Endothelial cell of umbilical vein (primary cell): ENCODE measurements at regions of chr7 and their contacts with region 1.

Region 1: DNA sequence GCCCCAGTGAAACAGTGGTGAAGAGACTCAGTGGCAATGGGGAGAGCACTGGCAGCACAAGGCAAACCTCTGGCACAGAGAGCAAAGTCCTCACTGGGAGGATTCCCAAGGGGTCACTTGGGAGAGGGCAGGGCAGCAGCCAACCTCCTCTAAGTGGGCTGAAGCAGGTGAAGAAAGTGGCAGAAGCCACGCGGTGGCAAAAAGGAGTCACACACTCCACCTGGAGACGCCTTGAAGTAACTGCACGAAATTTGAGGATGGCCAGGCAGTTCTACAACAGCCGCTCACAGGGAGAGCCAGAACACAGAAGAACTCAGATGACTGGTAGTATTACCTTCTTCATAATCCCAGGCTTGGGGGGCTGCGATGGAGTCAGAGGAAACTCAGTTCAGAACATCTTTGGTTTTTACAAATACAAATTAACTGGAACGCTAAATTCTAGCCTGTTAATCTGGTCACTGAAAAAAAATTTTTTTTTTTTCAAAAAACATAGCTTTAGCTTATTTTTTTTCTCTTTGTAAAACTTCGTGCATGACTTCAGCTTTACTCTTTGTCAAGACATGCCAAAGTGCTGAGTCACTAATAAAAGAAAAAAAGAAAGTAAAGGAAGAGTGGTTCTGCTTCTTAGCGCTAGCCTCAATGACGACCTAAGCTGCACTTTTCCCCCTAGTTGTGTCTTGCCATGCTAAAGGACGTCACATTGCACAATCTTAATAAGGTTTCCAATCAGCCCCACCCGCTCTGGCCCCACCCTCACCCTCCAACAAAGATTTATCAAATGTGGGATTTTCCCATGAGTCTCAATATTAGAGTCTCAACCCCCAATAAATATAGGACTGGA is 435 bp upstream of the IL6 start:
- DNase-seq: peak; percentile 84
- H3K4me3 ChIP-seq: peak overlapping the region; percentile 21 to 84 (median 42)
- H3K27ac ChIP-seq: peak overlapping the region; percentile 93
- H3K4me1 ChIP-seq: peaks cover 51% of the 10 kb centered on the region
- H3K27me3 ChIP-seq: no peaks in the 10 kb centered on the region
- CTCF ChIP-seq: peak; percentile 56 to 62
- POLR2A ChIP-seq: no peak

Region 2: GRCh38 chr7:22586786-22587140 is 139.8 kb before region 1 on chr7:
- CTCF ChIA-PET with region 1: interaction called, 130 read pairs
- POLR2A ChIA-PET with region 1: interaction called, 9 read pairs
- dilution Hi-C with region 1: no loop called
- intact Hi-C with region 1: loop called (anchors 1 kb)
- DNase-seq: no peak
- H3K4me3 ChIP-seq: no peak overlapping the region
- H3K27ac ChIP-seq: peak overlapping the region; percentile 95
- H3K4me1 ChIP-seq: peaks cover 75% of the 10 kb centered on the region
- H3K27me3 ChIP-seq: no peaks in the 10 kb centered on the region
- CTCF ChIP-seq: peak; percentile 34 to 56
- POLR2A ChIP-seq: no peak

Region 3: DNA sequence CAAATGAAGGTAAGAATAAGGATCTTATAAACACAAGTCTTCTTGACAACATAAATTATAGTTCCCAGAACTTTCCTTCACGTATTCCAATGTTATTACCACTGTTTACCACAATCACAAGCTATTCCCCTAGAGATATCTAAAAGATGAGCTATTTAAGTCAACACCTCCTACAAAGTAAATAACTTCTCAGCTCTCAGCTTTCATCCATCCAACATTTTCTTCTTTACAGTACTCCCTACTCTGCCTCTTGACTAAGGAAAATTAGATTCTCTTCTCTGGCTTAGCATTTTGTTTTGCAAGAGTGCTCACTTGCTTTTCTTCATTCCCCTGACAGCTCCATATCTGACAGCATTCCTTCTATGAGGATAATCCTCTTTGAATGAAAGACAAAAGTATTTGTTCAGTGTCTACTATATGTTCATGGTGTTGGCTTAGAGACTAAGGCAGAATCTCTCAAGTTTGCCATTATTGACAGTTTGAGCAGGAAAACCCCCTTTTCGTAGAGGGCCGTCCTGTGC is 92.6 kb before region 1 on chr7:
- CTCF ChIA-PET with region 1: interaction called, 17 read pairs
- POLR2A ChIA-PET with region 1: no interaction called
- dilution Hi-C with region 1: no loop called
- intact Hi-C with region 1: loop called (anchors 1 kb)
- DNase-seq: no peak
- H3K4me3 ChIP-seq: no peak overlapping the region
- H3K27ac ChIP-seq: peak overlapping the region; percentile 92
- H3K4me1 ChIP-seq: peaks cover 41% of the 10 kb centered on the region
- H3K27me3 ChIP-seq: no peaks in the 10 kb centered on the region
- CTCF ChIP-seq: no peak
- POLR2A ChIP-seq: no peak

Region 4: GRCh38 chr7:22667562-22668239 is 58.9 kb before region 1 on chr7:
- CTCF ChIA-PET with region 1: interaction called, 24 read pairs
- POLR2A ChIA-PET with region 1: no interaction called
- dilution Hi-C with region 1: no loop called
- intact Hi-C with region 1: loop called (anchors 1 kb)
- DNase-seq: peak; percentile 83
- H3K4me3 ChIP-seq: no peak overlapping the region
- H3K27ac ChIP-seq: peak overlapping the region; percentile 76
- H3K4me1 ChIP-seq: peaks cover 67% of the 10 kb centered on the region
- H3K27me3 ChIP-seq: no peaks in the 10 kb centered on the region
- CTCF ChIP-seq: no peak
- POLR2A ChIP-seq: no peak

Region 5: DNA sequence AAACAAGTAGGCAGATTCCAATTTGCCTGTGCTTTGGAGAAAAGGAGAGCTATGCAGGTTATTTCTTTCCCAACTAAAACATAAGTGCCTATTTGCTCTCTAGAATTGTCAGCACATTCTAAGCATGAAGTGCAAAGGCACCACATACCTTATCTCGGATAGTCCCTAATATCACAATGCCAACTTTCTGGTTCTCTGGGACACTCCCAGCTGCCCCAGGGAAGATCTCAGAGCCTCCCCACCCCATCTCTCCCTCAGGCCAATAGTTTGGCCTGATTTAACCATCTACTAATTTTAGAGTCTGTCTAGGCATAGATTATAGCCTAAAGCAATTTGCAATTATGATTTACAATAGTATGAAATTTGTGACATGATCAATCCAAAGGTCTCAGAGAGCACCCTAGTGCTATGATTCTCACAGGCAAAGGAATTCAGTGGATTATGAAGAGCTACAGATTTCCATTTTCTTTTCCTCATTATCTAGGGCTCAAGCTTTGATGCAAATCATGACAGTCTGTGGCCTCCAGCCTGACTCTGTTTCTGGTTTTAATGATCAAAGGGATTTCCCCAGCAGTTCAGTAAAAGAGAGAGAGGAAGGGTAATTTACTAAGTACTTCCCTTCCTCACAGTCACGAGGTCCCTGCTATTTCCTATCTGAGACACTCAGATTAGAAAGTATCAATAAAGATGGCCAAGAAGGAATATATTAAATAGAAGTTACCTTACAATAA is 28.5 kb before region 1 on chr7:
- CTCF ChIA-PET with region 1: interaction called, 21 read pairs
- POLR2A ChIA-PET with region 1: no interaction called
- dilution Hi-C with region 1: no loop called
- intact Hi-C with region 1: no loop called
- DNase-seq: peak; percentile 63
- H3K4me3 ChIP-seq: no peak overlapping the region
- H3K27ac ChIP-seq: no peak overlapping the region
- H3K4me1 ChIP-seq: peaks cover 23% of the 10 kb centered on the region
- H3K27me3 ChIP-seq: no peaks in the 10 kb centered on the region
- CTCF ChIP-seq: no peak
- POLR2A ChIP-seq: no peak

Region 6: DNA sequence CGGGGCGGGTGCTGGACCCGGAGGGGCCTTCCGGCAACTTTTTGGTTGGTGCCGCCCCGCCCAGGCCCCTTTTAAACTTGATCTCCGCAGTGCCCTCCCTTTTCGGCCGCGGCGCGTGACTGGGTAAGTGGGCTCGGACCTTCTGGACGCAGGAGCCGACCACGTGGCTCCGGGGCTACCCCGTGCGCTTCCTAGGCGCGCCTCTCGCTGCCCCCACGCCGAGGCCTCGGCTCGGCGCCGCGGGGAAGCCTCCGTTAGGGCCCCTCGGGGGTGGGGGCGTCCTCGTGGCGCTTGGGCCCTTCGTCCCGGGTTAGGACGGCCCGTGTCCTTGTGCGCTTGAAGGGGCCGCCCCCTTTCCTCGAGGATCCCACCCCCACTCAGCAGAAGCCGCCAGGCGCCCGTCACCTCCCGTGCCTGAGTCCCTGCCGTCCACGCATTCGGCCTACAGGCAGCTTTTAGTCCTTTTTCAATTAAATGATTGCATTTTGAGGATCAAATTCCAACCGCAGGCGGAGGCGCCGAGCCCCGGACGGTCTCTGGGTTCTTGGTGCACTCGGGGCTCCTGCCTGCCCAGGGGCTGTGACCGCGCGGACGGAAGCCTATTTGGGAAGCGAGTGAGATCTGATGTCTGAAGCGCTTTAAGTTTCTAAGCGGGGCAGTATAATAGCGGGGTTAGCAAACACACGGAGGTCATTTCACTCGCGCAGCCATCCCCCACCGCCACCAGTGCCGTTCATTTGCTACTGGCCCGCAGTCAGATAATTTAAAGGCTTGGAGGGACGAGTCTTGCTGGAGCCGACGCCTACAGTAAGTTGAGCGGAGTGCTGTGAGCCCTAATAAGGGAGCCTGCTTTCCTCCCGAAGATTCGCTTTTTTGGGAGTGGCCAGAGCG is 127.8 kb after region 1 on chr7:
- CTCF ChIA-PET with region 1: interaction called, 4 read pairs
- POLR2A ChIA-PET with region 1: no interaction called
- dilution Hi-C with region 1: no loop called
- intact Hi-C with region 1: loop called (anchors 2 kb)
- DNase-seq: peak; percentile 72
- H3K4me3 ChIP-seq: peak overlapping the region; percentile 76 to 88 (median 86)
- H3K27ac ChIP-seq: peak overlapping the region; percentile 74
- H3K4me1 ChIP-seq: peaks cover 36% of the 10 kb centered on the region
- H3K27me3 ChIP-seq: no peaks in the 10 kb centered on the region
- CTCF ChIP-seq: peak; percentile 41 to 58
- POLR2A ChIP-seq: peak; percentile 84

Region 7: DNA sequence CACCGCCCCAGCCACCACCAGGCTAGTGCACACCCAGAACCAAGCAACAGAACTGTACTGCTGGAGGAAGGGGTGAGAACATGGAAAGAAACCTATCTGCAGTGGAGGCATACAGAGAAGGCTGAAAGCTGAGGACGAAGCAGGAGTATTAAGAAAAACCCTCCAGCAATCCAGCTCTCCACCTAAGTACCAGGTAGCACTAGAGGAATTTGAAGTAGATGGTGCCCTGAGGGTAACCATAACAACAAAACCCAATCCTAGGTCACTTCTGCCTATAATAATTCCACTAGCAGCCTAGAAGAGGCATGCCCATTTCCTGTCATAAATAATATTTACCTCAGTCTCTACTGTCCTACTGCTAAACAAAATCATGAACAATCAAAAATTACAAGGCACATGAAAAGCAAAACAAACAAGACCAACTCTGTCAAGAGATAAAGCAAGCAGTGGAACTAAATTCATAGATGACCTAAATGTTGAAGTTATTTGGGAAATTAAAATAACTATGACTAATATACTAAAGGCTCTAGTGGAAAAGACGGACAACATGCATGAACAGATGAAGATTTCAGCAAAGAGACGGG is 236.3 kb after region 1 on chr7:
- CTCF ChIA-PET with region 1: no interaction called
- POLR2A ChIA-PET with region 1: no interaction called
- dilution Hi-C with region 1: no loop called
- intact Hi-C with region 1: no loop called
- DNase-seq: no peak
- H3K4me3 ChIP-seq: no peak overlapping the region
- H3K27ac ChIP-seq: no peak overlapping the region
- H3K4me1 ChIP-seq: no peaks in the 10 kb centered on the region
- H3K27me3 ChIP-seq: no peaks in the 10 kb centered on the region
- CTCF ChIP-seq: no peak
- POLR2A ChIP-seq: no peak